WTC11 (cell line): ENCODE measurements at regions of chr7 and their contacts with region 1.

Region 1: GRCh38 chr7:44534501-44534900 is 6.6 kb downstream of the NPC1L1 start:
- DNase-seq: peak; percentile 79
- ATAC-seq: peak; percentile 99
- H3K4me3 Mint-ChIP-seq: no peak overlapping the region
- H3K27ac Mint-ChIP-seq: no peak overlapping the region
- H3K4me1 Mint-ChIP-seq: no peaks in the 10 kb centered on the region
- H3K27me3 Mint-ChIP-seq: no peaks in the 10 kb centered on the region; the same call in 1 of the 2 replicates
- CTCF ChIP-seq: peak; percentile 75

Region 2: GRCh38 chr7:44103923-44104859 is 430.3 kb before region 1 on chr7 and contains the start of gene AEBP1:
- CTCF ChIA-PET with region 1: no interaction called
- POLR2A ChIA-PET with region 1: no interaction called
- DNase-seq: peak; percentile 50
- ATAC-seq: peak; percentile 47
- H3K4me3 Mint-ChIP-seq: peak within 1 kb of the TSS; percentile 70
- H3K27ac Mint-ChIP-seq: no peak within 1 kb of the TSS
- H3K4me1 Mint-ChIP-seq: peaks cover 15% of the 10 kb centered on the region
- H3K27me3 Mint-ChIP-seq: peaks cover 27% of the 10 kb centered on the region
- CTCF ChIP-seq: no peak
- total RNA-seq, gene AEBP1: 50.8 to 55.5 TPM (median 52.4 TPM) in 3 replicates

Region 3: DNA sequence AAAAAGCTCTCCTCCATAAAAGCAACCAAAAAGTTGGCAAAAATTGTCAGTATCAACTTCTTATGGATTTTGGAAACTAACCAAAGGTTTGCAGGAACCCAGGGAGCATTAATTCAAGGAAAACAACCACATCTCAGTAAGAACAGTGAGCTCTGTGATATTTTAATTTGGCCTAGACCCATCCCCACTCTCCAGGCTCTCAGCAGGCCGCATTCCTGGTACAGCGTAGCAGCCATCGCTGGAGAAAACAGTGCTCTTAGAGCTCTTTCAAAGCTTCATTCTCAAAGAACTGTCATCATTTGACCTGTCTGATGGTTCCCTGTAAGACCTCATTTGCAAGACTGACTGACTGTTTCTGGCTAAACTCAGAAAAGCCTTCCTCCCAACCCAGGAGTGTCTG is 125.9 kb before region 1 on chr7:
- CTCF ChIA-PET with region 1: interaction called, 11 read pairs
- POLR2A ChIA-PET with region 1: no interaction called
- DNase-seq: peak; percentile 48
- ATAC-seq: peak; percentile 97
- H3K4me3 Mint-ChIP-seq: peak overlapping the region; percentile 33
- H3K27ac Mint-ChIP-seq: peak overlapping the region; percentile 95
- H3K4me1 Mint-ChIP-seq: peaks cover 32% of the 10 kb centered on the region
- H3K27me3 Mint-ChIP-seq: no peaks in the 10 kb centered on the region
- CTCF ChIP-seq: no peak

Region 4: DNA sequence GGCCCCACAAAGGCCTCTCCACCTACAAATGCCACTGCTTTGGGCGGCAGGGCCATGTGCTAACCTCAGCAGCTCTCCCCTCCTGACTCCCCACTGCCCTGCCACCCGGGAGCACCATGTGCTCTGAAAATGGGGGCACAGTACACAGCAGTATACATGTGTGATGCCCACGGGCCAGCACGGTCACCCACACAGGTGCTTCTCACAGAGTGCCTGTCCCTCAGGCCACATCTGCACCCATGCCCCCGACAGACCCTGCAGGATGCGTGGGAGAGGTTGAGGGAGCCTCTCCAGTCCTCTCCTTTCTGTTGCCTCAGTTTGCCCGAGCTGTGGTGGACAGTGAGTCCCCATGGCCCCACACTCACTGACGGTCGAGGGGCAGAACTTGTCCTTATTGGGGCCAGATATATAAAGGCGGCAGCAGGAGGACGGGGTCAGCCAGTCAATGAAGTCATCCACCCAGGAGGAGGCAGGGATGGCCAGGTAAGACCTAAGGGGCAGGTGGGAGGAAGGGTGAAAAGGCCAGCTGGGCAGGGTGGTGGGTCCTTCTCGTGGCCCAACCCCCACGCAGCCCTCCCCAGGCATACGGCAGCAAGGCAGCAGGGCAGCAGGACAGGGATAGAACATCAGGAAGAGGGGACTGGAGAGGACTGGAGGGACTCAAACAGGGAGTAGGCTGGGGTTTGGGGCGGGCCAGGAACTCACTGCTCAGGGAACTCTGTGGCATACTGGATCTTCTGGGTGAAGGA is 13.0 kb before region 1 on chr7:
- CTCF ChIA-PET with region 1: interaction called, 22 read pairs
- POLR2A ChIA-PET with region 1: no interaction called
- DNase-seq: no peak
- ATAC-seq: no peak
- H3K4me3 Mint-ChIP-seq: no peak overlapping the region
- H3K27ac Mint-ChIP-seq: no peak overlapping the region
- H3K4me1 Mint-ChIP-seq: no peaks in the 10 kb centered on the region
- H3K27me3 Mint-ChIP-seq: peaks cover 9% of the 10 kb centered on the region; the same call in 1 of the 2 replicates
- CTCF ChIP-seq: no peak

Region 5: DNA sequence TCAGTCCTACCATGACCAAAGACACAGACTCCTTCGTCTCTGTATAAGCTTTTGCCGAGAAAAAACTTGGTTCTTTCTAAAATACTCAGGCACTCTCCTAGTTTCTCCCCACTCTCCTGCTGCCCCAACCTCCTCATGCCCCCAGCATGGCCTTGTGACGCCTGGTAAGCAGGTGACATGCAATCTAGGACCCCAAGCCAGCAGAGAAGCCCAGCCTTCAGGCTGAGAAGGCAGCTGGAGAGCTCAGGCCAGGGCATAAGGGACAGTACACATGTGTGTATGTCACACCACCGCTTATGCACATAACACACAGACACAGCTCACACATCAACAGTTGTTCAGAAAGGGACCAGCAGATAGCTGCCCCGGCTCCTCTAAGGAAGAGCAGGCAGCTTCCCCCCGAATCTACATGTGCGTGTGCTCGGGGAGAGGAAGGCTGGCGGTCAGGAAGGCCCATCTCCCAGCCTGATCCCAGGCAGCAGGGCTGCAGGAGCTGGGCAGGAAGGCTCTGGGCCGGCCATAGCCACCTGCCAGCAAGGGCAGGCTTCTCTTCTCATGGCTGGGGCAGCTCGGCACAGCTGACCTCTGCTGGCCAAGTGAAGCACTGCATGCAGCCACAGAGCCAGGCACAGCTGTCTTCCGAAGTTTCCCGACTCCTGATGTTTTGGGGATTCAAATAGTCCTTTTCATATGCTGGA is 30.7 kb after region 1 on chr7:
- CTCF ChIA-PET with region 1: interaction called, 32 read pairs
- POLR2A ChIA-PET with region 1: no interaction called
- DNase-seq: peak; percentile 80
- ATAC-seq: peak; percentile 87
- H3K4me3 Mint-ChIP-seq: no peak overlapping the region
- H3K27ac Mint-ChIP-seq: peak overlapping the region; percentile 64; the same call in 1 of the 2 replicates
- H3K4me1 Mint-ChIP-seq: no peaks in the 10 kb centered on the region
- H3K27me3 Mint-ChIP-seq: no peaks in the 10 kb centered on the region
- CTCF ChIP-seq: peak; percentile 95